ENCODE measurements at regions of chr18 and their contacts with region 1.

Region 1: DNA sequence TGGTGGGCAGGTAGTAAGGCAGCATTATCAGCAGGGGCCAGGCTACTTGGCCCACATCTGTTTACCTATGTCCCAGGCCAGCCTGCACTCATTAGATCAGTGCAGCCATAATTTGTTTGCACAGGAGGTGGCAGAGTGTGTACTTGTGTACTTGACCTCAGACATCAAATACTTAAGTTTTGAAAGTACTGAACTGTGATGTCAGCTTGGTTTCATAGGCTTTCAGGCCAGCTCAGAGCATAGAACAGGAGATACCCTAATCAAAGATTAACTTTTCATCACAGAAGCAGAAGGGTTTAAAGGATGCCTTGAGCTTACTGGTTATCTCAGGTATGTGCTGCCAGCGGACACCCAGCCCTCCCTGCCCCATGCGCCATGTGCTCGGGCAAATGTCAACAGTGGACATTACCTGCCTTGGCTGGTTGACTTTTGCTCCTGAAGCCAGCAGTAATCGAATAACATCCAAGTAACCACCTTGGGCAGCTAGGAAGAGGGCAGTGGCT is 33.2 kb downstream of the ANKRD29 start:
- DNase-seq: no peak
- ATAC-seq: no peak
- H3K4me3 ChIP-seq: no peak overlapping the region
- H3K27ac ChIP-seq: no peak overlapping the region
- H3K4me1 ChIP-seq: peaks cover 0 to 21% (median 8%) of the 10 kb centered on the region in 9 donors
- H3K27me3 ChIP-seq: no peaks in the 10 kb centered on the region
- CTCF ChIP-seq: no peak

Region 2: GRCh38 chr18:23529597-23529996 is 99.9 kb before region 1 on chr18:
- intact Hi-C with region 1: no loop called
- DNase-seq: no peak
- ATAC-seq: no peak
- H3K4me3 ChIP-seq: no peak overlapping the region
- H3K27ac ChIP-seq: peak overlapping the region in 1 of 10 donors; percentile 18
- H3K4me1 ChIP-seq: peaks cover 0 to 26% (median 0%) of the 10 kb centered on the region in 9 donors
- H3K27me3 ChIP-seq: no peaks in the 10 kb centered on the region
- CTCF ChIP-seq: no peak

Region 3: GRCh38 chr18:23805898-23806297 is 176.4 kb after region 1 on chr18:
- intact Hi-C with region 1: loop called in 9 of 10 experiments (anchors 5 to 10 kb)
- DNase-seq: no peak
- ATAC-seq: no peak
- H3K4me3 ChIP-seq: no peak overlapping the region
- H3K27ac ChIP-seq: no peak overlapping the region
- H3K4me1 ChIP-seq: no peaks in the 10 kb centered on the region
- H3K27me3 ChIP-seq: no peaks in the 10 kb centered on the region
- CTCF ChIP-seq: no peak

Region 4: DNA sequence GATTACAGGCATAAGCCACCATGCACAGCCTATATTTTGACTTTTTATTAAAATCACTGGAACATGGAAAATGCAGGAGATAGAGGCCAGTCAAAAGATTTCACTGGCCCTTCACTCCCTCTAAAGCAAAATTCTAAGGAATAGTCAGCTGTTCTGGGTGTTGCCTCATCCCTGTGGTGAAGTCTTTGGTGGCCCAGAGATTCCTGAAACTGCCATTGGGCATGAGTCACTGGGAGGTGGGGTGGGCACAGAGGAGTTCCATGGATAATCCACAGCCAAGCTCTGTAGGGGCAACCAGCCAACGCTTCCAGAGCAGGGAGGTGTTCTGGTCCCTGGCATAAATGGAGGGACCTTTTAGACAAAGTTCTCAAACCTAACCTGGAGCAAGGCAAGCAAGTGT is 295.3 kb after region 1 on chr18:
- intact Hi-C with region 1: loop called in 1 of 10 experiments (anchors 10 kb)
- DNase-seq: no peak
- ATAC-seq: peak in 1 of 8 donors; percentile 22
- H3K4me3 ChIP-seq: no peak overlapping the region
- H3K27ac ChIP-seq: no peak overlapping the region
- H3K4me1 ChIP-seq: no peaks in the 10 kb centered on the region
- H3K27me3 ChIP-seq: no peaks in the 10 kb centered on the region
- CTCF ChIP-seq: no peak

Region 5: GRCh38 chr18:24126155-24126961 is 496.9 kb after region 1 on chr18:
- intact Hi-C with region 1: loop called in 2 of 10 experiments (anchors 10 kb)
- DNase-seq: no peak
- ATAC-seq: no peak
- H3K4me3 ChIP-seq: no peak overlapping the region
- H3K27ac ChIP-seq: no peak overlapping the region
- H3K4me1 ChIP-seq: peaks cover 0 to 5% (median 0%) of the 10 kb centered on the region in 9 donors
- H3K27me3 ChIP-seq: no peaks in the 10 kb centered on the region
- CTCF ChIP-seq: no peak

Measured in heart right ventricle (tissue), 16 donors.